Spleen (tissue), 13 donors: ENCODE measurements at regions of chr20 and their contacts with region 1.

Region 1: GRCh38 chr20:7285918-7286556 is 518.6 kb downstream of the BMP2 start:
- DNase-seq: no peak
- H3K4me3 ChIP-seq: no peak overlapping the region
- H3K27ac ChIP-seq: no peak overlapping the region
- H3K4me1 ChIP-seq: peaks cover 0 to 4% (median 0%) of the 10 kb centered on the region in 6 donors
- H3K27me3 ChIP-seq: peaks cover 0 to 4% (median 0%) of the 10 kb centered on the region in 7 donors
- CTCF ChIP-seq: peak in 10 of 11 experiments; percentile 32 to 73 (median 60)
- POLR2A ChIP-seq: no peak

Region 2: DNA sequence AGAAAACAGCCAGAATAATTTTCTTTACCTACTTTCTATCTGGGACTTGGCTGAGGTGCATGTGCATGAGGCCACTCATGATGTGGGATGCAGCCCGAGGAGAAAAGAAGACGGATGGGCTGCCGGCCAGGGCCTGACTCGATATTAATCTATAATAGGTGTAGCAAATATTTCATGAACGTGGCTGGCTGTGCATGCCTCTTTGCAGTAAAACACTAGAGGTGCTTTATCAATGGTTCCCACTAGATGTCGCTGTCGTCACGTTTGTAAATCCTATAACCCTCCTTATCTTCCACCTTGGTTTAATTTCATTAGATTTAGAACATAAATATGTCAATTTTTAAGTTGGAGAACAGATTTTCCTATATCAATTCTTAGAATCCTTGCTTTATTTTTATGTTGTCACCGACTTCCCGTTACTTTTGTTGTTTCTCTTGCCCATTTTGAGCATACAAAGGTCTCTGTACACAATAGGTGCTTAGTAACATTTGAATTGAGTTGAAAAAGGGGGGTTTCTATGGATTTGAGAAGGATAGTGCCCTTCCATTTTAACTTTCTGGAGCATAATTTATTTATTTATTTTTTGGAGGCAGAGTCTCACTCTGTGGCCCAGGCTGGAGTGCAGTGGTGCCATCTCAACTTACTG is 1143.6 kb before region 1 on chr20:
- intact Hi-C with region 1: loop called (anchors 10 kb)
- DNase-seq: no peak
- H3K4me3 ChIP-seq: no peak overlapping the region
- H3K27ac ChIP-seq: no peak overlapping the region
- H3K4me1 ChIP-seq: no peaks in the 10 kb centered on the region
- H3K27me3 ChIP-seq: peaks cover 0 to 27% (median 0%) of the 10 kb centered on the region in 7 donors
- CTCF ChIP-seq: peak; percentile 17 to 87 (median 62)
- POLR2A ChIP-seq: no peak

Region 3: GRCh38 chr20:7123457-7123856 is 162.6 kb before region 1 on chr20:
- intact Hi-C with region 1: no loop called
- DNase-seq: no peak
- H3K4me3 ChIP-seq: no peak overlapping the region
- H3K27ac ChIP-seq: no peak overlapping the region
- H3K4me1 ChIP-seq: no peaks in the 10 kb centered on the region
- H3K27me3 ChIP-seq: no peaks in the 10 kb centered on the region
- CTCF ChIP-seq: no peak
- POLR2A ChIP-seq: no peak